ENCODE measurements at regions of chr6 and their contacts with region 1.

Region 1: DNA sequence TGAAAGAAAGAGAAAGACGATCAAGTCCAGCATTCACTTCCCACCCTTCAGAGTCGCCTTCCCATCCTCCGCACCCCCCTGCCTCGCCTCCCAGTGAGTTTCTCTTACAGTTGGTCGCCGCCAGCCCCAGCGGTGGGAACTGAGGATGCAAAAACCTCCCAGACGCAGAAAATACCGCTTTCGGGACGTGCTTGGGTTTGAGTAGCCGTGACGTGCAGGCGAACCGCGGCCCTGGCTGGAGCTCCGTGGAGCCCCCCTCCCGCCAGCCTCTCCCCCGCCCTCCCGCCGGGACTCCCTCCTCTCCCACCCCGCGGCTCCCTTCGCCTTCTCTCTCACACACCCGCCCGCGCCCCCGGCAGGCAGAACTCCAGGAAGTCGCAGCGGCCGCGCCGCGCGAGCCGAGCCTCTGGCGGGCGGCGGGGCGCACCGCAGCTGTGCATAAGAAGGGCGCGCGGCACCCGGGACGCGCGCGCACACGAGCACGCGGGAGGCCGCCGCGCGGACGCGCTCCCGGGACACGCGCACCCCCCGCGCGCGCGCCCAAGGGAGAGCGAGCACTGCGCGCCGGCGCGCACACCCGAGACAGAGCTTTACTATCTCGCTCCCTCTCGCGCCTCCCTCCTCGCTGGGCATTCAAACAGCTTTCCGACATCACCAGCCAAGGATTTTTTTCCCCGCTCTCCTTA is at the start of gene ADGRB3:
- DNase-seq: peak; percentile 84

Region 2: GRCh38 chr6:68427630-68428029 is 207.2 kb before region 1 on chr6:
- in situ Hi-C with region 1: no loop called
- DNase-seq: no peak

Region 3: DNA sequence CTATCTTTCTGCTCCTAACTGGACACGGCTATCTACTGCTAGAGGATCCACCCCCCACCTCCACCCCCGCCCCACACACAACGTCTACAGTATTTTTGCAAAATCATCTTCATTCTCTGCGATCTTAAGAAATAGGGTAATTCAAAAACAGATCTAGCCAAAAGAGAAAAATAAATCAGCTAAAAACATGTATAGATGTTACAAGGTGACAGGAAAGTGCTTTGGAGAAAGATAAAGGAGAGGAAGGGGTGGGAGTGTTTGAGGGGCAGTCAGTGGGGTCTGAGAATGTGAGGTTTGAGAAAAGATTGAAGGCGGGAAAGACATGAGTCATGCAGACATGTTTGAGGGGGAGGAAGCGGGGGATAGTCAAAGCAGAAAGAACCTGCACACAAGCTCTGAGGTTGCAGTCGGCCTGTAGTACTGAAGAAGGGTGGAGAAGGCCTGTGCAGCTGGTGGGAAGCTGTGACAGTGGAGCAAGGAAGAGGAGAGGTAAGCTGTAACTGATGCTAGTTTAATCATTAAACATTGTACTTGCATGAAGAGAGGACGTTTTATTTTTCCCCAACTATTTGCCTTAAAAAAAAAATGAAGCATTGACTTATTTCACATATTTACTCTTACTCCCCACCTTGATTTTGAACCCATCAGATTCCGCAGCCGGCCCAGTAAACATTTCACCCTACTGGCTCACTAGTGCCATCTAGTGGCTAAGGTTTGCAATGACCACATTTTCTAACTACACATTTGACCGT is 332.9 kb after region 1 on chr6:
- in situ Hi-C with region 1: loop called (anchors 25 kb)
- DNase-seq: peak; percentile 69

Measured in KBM-7 (cell line).